ENCODE measurements at regions of chr19 and their contacts with region 1.

Region 1: DNA sequence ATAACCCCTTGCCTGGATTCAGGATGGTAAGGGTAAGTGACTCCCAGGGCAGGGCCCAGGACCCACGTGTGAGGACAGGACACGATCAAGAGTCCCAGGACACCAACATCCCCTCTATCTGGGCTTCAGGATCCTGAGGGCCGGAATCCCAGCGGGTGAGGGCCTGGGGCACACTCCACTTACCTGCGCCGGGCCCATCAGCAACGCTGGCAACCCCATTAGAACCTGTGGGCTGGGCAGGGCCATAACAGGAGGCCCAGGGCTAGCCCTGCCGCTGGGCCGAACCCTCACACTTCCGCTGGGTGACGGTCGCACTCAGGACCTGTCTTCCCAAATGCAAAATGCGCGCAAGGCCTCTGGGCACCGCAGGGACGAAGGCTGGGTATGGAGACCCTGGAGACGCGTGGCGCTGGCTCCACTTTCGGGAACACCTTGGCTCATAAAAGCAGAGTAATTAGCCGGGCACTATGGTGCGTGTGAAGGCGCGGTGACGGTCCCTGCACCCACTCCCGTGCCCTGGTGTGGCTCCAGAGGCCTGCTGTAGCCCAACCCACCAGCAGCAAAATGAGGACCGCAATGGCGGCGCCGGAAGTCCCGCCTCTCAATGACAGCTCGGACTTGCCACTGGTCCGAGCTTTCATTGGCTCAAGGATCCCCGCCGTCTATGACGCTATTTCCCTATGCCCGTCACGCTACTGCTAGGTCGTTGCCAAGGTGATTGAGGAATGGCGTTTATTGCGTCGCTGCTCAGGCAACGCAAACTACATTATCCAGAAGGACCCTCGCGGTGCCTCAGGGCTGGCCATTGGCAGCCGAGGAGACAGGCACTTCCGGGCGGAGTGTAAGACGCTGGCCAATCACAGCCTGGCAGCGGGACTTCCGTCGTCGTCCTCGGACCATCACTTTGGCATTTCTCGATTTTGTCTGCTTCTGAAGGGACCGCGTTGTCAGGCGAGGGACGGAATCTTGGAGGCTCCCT is at the start of gene ZNF132:
- DNase-seq: peak; percentile 93 to 99 (median 98)
- H3K4me3 ChIP-seq: peak within 1 kb of the TSS; percentile 72 to 80
- H3K4me3 Mint-ChIP-seq: peak within 1 kb of the TSS; percentile 87 to 97 (median 96)
- H3K27ac ChIP-seq: peak within 1 kb of the TSS; percentile 69
- H3K27ac Mint-ChIP-seq: peak within 1 kb of the TSS; percentile 82 to 100 (median 99)
- H3K4me1 ChIP-seq: peaks cover 18% of the 10 kb centered on the region
- H3K4me1 Mint-ChIP-seq: peaks cover 12 to 30% (median 22%) of the 10 kb centered on the region in 4 donors
- H3K27me3 ChIP-seq: no peaks in the 10 kb centered on the region
- H3K27me3 Mint-ChIP-seq: peaks cover 2 to 3% of the 10 kb centered on the region in 2 donors
- total RNA-seq, gene ZNF132: 9.5 to 11.7 TPM

Region 2: DNA sequence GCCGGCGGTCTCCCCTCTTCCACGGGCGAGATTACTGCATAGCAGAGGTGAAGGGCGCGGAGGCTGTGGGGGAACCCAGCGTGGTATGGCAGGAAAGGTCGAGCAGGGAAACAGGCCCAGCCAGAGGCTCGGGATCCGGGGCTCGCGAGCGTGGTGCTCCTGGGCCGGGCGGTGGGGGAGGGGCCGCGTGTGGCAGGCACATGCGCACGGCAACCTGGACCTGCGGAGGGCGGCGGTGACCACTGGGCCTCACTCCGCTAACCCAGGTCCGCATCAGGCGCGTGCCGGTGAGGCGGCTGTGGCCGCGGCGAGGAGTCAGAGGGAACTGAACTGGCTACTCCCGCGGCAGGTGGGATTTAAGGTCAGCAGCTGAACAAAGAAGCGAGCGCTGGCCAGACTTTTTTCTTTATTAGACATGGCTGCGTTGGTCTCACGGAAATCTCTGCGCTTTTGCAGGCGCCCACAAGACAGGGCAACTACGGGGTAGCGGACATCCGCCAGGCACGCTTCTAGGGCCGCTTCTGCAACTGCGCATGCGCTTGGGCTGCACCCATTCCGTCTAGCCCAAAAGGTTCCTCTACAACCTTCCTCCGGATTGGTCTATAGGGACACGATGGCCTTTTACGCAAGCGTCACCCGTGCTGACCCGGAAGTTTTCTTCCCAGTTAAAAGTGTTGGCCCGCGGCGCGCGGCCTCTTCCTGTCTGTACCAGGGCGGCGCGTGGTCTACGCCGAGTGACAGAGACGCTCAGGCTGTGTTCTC is 53.1 kb before region 1 on chr19 and contains the start of gene RPS5:
- CTCF ChIA-PET with region 1: no interaction called
- POLR2A ChIA-PET with region 1: no interaction called
- intact Hi-C with region 1: loop called (anchors 1 kb)
- DNase-seq: peak; percentile 94 to 99 (median 98)
- H3K4me3 ChIP-seq: peak within 1 kb of the TSS; percentile 56 to 65
- H3K4me3 Mint-ChIP-seq: peak within 1 kb of the TSS; percentile 93 to 99 (median 96)
- H3K27ac ChIP-seq: peak within 1 kb of the TSS; percentile 89
- H3K27ac Mint-ChIP-seq: peak within 1 kb of the TSS; percentile 96 to 99 (median 98)
- H3K4me1 ChIP-seq: peaks cover 41% of the 10 kb centered on the region
- H3K4me1 Mint-ChIP-seq: peaks cover 27 to 60% (median 39%) of the 10 kb centered on the region in 4 donors
- H3K27me3 ChIP-seq: no peaks in the 10 kb centered on the region
- H3K27me3 Mint-ChIP-seq: no peaks in the 10 kb centered on the region
- total RNA-seq, gene RPS5: 1,267 to 1,360 TPM

Region 3: GRCh38 chr19:58408152-58409009 is 31.5 kb before region 1 on chr19 and contains the start of gene ZNF584:
- CTCF ChIA-PET with region 1: interaction called, 3 read pairs
- POLR2A ChIA-PET with region 1: interaction called, 7 read pairs
- intact Hi-C with region 1: loop called (anchors 1 kb)
- DNase-seq: peak; percentile 93 to 94 (median 93)
- H3K4me3 ChIP-seq: peak within 1 kb of the TSS; percentile 71 to 94
- H3K4me3 Mint-ChIP-seq: peak within 1 kb of the TSS; percentile 92 to 100 (median 96)
- H3K27ac ChIP-seq: peak within 1 kb of the TSS; percentile 77
- H3K27ac Mint-ChIP-seq: peak within 1 kb of the TSS; percentile 91 to 98 (median 95)
- H3K4me1 ChIP-seq: peaks cover 25% of the 10 kb centered on the region
- H3K4me1 Mint-ChIP-seq: peaks cover 21 to 39% (median 33%) of the 10 kb centered on the region in 4 donors
- H3K27me3 ChIP-seq: no peaks in the 10 kb centered on the region
- H3K27me3 Mint-ChIP-seq: no peaks in the 10 kb centered on the region
- total RNA-seq, gene ZNF584: 10.3 to 10.7 TPM

Region 4: DNA sequence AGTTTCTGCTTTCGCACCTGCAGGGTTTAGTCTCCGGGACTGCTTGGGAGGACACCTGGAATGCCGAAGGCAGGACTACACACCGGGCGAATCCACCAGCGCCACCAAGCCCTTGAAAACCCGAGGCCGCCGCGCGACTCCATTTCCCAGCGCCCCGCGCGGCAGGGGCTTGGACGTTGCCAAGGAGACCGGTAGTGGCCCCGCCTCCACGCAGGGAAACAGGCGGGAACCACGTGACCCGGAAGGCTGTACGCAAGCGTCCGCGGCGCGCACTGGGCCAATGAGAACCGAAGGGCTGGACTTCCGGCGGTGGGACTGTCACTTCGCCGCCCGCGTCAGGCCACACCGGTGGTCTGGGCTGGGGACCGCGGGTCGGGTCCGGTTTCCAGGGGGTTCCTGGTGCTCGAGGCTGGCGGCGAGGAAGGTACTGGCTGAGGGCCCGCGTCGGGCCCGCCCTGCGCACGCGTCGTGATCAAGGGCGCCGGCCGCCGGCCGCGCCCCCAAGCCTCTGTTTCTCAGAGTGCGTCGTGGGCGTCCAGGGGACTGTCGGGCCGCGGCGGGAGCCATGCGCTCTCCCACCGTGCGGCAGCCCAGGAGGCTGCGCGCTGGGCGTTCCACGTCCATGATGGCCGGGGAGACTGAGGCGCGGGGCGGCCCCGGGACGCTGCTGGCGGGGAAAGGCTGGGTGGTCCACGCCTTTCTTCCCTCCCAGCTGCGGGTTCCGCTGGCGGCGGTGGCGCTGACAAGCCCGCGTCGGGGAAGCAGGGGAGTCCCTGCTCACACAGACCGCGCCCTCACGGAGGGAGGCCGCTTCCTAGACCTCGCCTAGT is 27.1 kb after region 1 on chr19 and contains the start of gene ZNF324:
- CTCF ChIA-PET with region 1: no interaction called
- POLR2A ChIA-PET with region 1: interaction called, 3 read pairs
- intact Hi-C with region 1: loop called (anchors 1 kb)
- DNase-seq: peak; percentile 94 to 96 (median 95)
- H3K4me3 ChIP-seq: peak within 1 kb of the TSS; percentile 52 to 83
- H3K4me3 Mint-ChIP-seq: peak within 1 kb of the TSS; percentile 82 to 91 (median 87)
- H3K27ac ChIP-seq: peak within 1 kb of the TSS; percentile 92
- H3K27ac Mint-ChIP-seq: peak within 1 kb of the TSS; percentile 80 to 93 (median 91)
- H3K4me1 ChIP-seq: peaks cover 20% of the 10 kb centered on the region
- H3K4me1 Mint-ChIP-seq: peaks cover 14 to 32% (median 22%) of the 10 kb centered on the region in 4 donors
- H3K27me3 ChIP-seq: no peaks in the 10 kb centered on the region
- H3K27me3 Mint-ChIP-seq: peaks cover 0 to 1% of the 10 kb centered on the region in 2 donors
- total RNA-seq, gene ZNF324: 27.6 TPM